Heart right ventricle (tissue), 16 donors: ENCODE measurements at regions of chr1 and their contacts with region 1.

Region 1: DNA sequence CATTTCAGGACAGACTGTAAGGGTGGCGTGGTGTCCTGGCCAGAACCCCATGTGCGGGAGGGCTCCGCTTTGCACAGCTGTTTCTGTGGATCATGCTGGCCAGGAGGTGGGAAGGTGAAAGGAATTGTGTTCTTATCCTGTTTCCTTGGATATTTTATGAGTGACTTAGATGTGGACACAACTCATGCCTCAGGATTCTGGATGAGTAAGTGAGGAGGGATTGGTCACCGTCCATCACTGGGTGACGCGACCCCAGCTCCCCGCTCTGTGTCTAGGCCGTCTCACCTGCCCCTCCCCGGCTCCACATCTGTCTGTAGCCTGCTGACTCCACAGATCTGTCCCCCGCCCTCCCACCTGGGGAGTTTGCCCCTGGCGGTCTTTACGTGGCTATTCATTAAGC is 48.8 kb downstream of the PIK3CD start:
- DNase-seq: no peak
- ATAC-seq: no peak
- H3K4me3 ChIP-seq: no peak overlapping the region
- H3K27ac ChIP-seq: no peak overlapping the region
- H3K4me1 ChIP-seq: peaks cover 0 to 32% (median 0%) of the 10 kb centered on the region in 9 donors
- H3K27me3 ChIP-seq: no peaks in the 10 kb centered on the region
- CTCF ChIP-seq: no peak

Region 2: GRCh38 chr1:9852410-9853248 is 152.3 kb after region 1 on chr1:
- intact Hi-C with region 1: loop called in 1 of 10 experiments (anchors 10 kb)
- DNase-seq: no peak
- ATAC-seq: peak in 4 of 8 donors; percentile 10 to 65 (median 58)
- H3K4me3 ChIP-seq: no peak overlapping the region
- H3K27ac ChIP-seq: no peak overlapping the region
- H3K4me1 ChIP-seq: peaks cover 0 to 22% (median 9%) of the 10 kb centered on the region in 9 donors
- H3K27me3 ChIP-seq: no peaks in the 10 kb centered on the region
- CTCF ChIP-seq: no peak

Region 3: GRCh38 chr1:9867408-9868243 is 167.3 kb after region 1 on chr1:
- intact Hi-C with region 1: no loop called
- DNase-seq: peak; percentile 70 to 79
- ATAC-seq: peak; percentile 81 to 92 (median 84)
- H3K4me3 ChIP-seq: no peak overlapping the region
- H3K27ac ChIP-seq: no peak overlapping the region
- H3K4me1 ChIP-seq: peaks cover 0 to 25% (median 14%) of the 10 kb centered on the region in 9 donors
- H3K27me3 ChIP-seq: no peaks in the 10 kb centered on the region
- CTCF ChIP-seq: peak; percentile 94 to 99 (median 98)